Left cardiac atrium (tissue), 4 donors: ENCODE measurements at regions of chr9 and their contacts with region 1.

Region 1: GRCh38 chr9:134443168-134444037 is 117.1 kb downstream of the RXRA start:
- DNase-seq: peak; percentile 87
- ATAC-seq: peak; percentile 80 to 83

Region 2: GRCh38 chr9:134171316-134172197 is 271.8 kb before region 1 on chr9:
- intact Hi-C with region 1: loop called (anchors 1 to 2 kb)
- DNase-seq: no peak
- ATAC-seq: peak in 1 of 2 donors; percentile 31

Region 3: DNA sequence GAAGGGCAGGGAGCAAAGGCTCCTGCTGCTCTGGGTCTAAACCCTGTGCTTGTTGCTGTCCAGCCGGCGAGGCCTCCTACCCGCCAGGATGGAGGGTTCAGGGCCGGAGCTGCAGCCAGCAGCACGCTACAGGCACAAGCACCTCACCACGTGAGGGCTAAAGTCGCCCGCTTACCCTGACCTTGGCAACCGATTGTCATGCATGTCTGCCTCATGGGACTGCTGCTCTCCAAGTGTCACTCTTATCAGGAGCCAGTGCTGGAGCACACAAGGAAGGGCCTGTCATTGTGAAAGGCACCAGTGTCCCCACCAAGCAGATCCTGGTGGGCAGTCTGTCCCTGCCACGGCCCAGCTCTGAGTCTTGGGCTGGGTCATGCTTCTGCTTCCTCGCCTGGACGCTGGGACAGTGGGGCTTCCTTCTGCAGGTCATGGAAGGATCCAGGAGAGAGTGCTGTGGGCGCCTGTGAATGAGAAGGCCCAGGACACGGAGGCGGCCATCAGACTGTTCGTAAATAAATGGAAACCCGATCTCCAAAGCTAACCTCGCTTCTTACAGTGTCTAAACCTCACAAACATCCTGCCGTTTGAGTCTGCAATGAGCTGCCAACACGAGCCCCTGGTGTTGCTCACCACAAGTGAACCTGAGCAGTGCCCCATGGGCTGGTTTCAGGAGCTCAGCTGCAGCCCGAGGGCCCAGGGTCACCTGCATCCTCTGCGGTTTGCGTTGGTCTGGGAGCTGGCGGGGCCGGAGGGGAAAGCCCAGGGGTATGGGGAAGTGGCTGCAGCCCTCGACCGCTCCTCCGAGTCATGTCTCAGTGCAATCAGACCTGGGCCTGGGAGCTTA is 175.3 kb before region 1 on chr9:
- intact Hi-C with region 1: loop called in 1 of 2 experiments (anchors 2 kb)
- DNase-seq: no peak
- ATAC-seq: peak; percentile 71